ENCODE measurements at regions of chr20 and their contacts with region 1.

Region 1: DNA sequence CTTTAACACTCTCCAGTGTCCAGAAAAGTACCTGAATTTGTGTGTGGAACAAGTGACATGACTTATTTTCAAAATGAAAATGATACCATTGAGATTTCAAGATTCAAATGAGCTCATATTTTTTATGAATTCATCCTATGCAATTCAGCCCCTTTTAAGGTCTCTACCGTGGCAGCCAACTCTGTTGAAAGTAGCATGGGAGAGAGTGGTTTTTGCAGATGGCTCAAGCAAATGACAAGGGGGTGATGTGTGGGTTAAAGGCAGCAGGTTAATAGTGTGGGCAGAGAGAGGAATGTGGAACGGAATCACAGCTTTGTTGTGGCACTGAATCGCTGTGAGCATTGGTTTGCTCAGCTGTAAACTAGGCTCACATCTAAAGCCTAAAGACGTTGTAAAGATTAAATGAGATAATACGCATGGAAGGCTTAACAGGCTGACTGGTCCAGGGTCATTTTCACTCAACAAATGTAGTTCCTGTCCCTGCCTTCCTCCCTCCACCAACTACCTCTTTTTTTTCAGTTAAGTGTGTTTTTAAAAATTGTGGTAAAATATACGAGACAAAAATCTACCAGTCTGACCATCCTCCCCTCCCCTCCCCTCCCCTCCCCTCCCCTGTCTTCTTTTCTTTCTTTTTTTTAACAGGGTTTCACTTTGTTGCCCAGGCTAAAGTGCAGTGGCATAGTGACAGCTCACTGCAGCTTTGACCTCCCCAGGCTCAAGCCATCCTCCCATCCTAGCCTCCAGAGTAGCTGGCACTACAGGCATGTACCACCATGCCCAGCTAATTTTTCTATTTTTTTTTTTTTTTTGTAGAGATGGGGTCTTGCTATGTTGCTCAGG is 114.7 kb upstream of the ZNF217 start:
- DNase-seq: peak; percentile 94
- ATAC-seq: peak; percentile 83
- H3K4me3 ChIP-seq: peak overlapping the region; percentile 43; the same call in 1 of the 2 replicates
- H3K27ac ChIP-seq: peak overlapping the region; percentile 97
- H3K4me1 ChIP-seq: peaks cover 45% of the 10 kb centered on the region
- H3K27me3 ChIP-seq: no peaks in the 10 kb centered on the region
- CTCF ChIP-seq: no peak
- EP300 ChIP-seq: peak in 1 of 2 experiments; percentile 35; a peak in 3 of 4 replicates
- POLR2A ChIP-seq: peak; percentile 36
- RAD21 ChIP-seq: 0 out of 2 replicates have a peak, but pooled peaks have one; percentile 6

Region 2: GRCh38 chr20:53611449-53611894 is 96.9 kb before region 1 on chr20:
- CTCF ChIA-PET with region 1: interaction called, 4 read pairs
- POLR2A ChIA-PET with region 1: interaction called, 3 read pairs
- RAD21 ChIA-PET with region 1: interaction called, 7 read pairs
- SMC1A ChIA-PET with region 1: interaction called, 13 read pairs
- in situ Hi-C with region 1: no loop called
- intact Hi-C with region 1: no loop called
- DNase-seq: peak; percentile 82
- ATAC-seq: peak; percentile 84
- H3K4me3 ChIP-seq: peak overlapping the region; percentile 15; the same call in 1 of the 2 replicates
- H3K27ac ChIP-seq: peak overlapping the region; percentile 87
- H3K4me1 ChIP-seq: peaks cover 15% of the 10 kb centered on the region
- H3K27me3 ChIP-seq: no peaks in the 10 kb centered on the region
- CTCF ChIP-seq: no peak
- EP300 ChIP-seq: peak; percentile 71 to 80; a peak in 3 of 4 replicates
- POLR2A ChIP-seq: no peak
- RAD21 ChIP-seq: no peak

Region 3: GRCh38 chr20:53652090-53652858 is 56.1 kb before region 1 on chr20:
- CTCF ChIA-PET with region 1: interaction called, 4 read pairs
- POLR2A ChIA-PET with region 1: interaction called, 12 read pairs
- RAD21 ChIA-PET with region 1: interaction called, 30 read pairs
- SMC1A ChIA-PET with region 1: interaction called, 23 read pairs
- in situ Hi-C with region 1: no loop called
- intact Hi-C with region 1: no loop called
- DNase-seq: peak; percentile 93
- ATAC-seq: peak; percentile 76
- H3K4me3 ChIP-seq: peak overlapping the region; percentile 30; the same call in 1 of the 2 replicates
- H3K27ac ChIP-seq: peak overlapping the region; percentile 99
- H3K4me1 ChIP-seq: peaks cover 39% of the 10 kb centered on the region
- H3K27me3 ChIP-seq: no peaks in the 10 kb centered on the region
- CTCF ChIP-seq: no peak
- EP300 ChIP-seq: peak; percentile 68 to 72; a peak in 2 of 4 replicates
- POLR2A ChIP-seq: no peak
- RAD21 ChIP-seq: peak; percentile 17; the same call in 1 of the 2 replicates

Region 4: GRCh38 chr20:53684971-53685797 is 23.2 kb before region 1 on chr20:
- CTCF ChIA-PET with region 1: interaction called, 3 read pairs
- POLR2A ChIA-PET with region 1: interaction called, 22 read pairs
- RAD21 ChIA-PET with region 1: interaction called, 15 read pairs
- SMC1A ChIA-PET with region 1: interaction called, 11 read pairs
- in situ Hi-C with region 1: no loop called
- intact Hi-C with region 1: no loop called
- DNase-seq: no peak
- ATAC-seq: peak; percentile 25
- H3K4me3 ChIP-seq: no peak overlapping the region
- H3K27ac ChIP-seq: peak overlapping the region; percentile 43; the same call in 1 of the 2 replicates
- H3K4me1 ChIP-seq: peaks cover 25% of the 10 kb centered on the region
- H3K27me3 ChIP-seq: no peaks in the 10 kb centered on the region
- CTCF ChIP-seq: no peak
- EP300 ChIP-seq: no peak
- POLR2A ChIP-seq: no peak
- RAD21 ChIP-seq: no peak

Region 5: GRCh38 chr20:53905019-53905847 is 196.9 kb after region 1 on chr20:
- CTCF ChIA-PET with region 1: no interaction called
- POLR2A ChIA-PET with region 1: interaction called, 4 read pairs
- RAD21 ChIA-PET with region 1: interaction called, 6 read pairs
- SMC1A ChIA-PET with region 1: interaction called, 12 read pairs
- in situ Hi-C with region 1: no loop called
- intact Hi-C with region 1: no loop called
- DNase-seq: no peak
- ATAC-seq: peak; percentile 51
- H3K4me3 ChIP-seq: 0 out of 2 replicates have a peak overlapping the region, but pooled peaks have one; percentile 15
- H3K27ac ChIP-seq: peak overlapping the region; percentile 72
- H3K4me1 ChIP-seq: peaks cover 43% of the 10 kb centered on the region
- H3K27me3 ChIP-seq: no peaks in the 10 kb centered on the region
- CTCF ChIP-seq: no peak
- EP300 ChIP-seq: peak in 1 of 2 experiments; percentile 50; a peak in 1 of 4 replicates
- POLR2A ChIP-seq: no peak
- RAD21 ChIP-seq: no peak

Measured in GM12878 (cell line).